Activated CD8-positive, alpha-beta T cell treated with anti-CD3 and anti-CD28 coated beads for 36 hours (primary cell): ENCODE measurements at regions of chr2 and their contacts with region 1.

Region 1: GRCh38 chr2:85420536-85421259 is 2.2 kb downstream of the SH2D6 start:
- DNase-seq: peak; percentile 95
- ATAC-seq: peak; percentile 74
- H3K4me3 Mint-ChIP-seq: peak overlapping the region; percentile 31
- H3K27ac Mint-ChIP-seq: peak overlapping the region; percentile 73
- H3K4me1 Mint-ChIP-seq: peaks cover 18% of the 10 kb centered on the region
- H3K27me3 Mint-ChIP-seq: no peaks in the 10 kb centered on the region
- CTCF ChIP-seq: peak; percentile 97

Region 2: GRCh38 chr2:85390941-85391669 is 29.6 kb before region 1 on chr2:
- CTCF ChIA-PET with region 1: interaction called, 11 read pairs
- POLR2A ChIA-PET with region 1: no interaction called
- intact Hi-C with region 1: no loop called
- DNase-seq: peak; percentile 85
- ATAC-seq: peak; percentile 88
- H3K4me3 Mint-ChIP-seq: no peak overlapping the region
- H3K27ac Mint-ChIP-seq: no peak overlapping the region
- H3K4me1 Mint-ChIP-seq: peaks cover 3% of the 10 kb centered on the region
- H3K27me3 Mint-ChIP-seq: no peaks in the 10 kb centered on the region
- CTCF ChIP-seq: peak; percentile 67

Region 3: GRCh38 chr2:85409845-85410583 is 10.7 kb before region 1 on chr2 and contains the start of gene CAPG:
- CTCF ChIA-PET with region 1: interaction called, 13 read pairs
- POLR2A ChIA-PET with region 1: no interaction called
- intact Hi-C with region 1: no loop called
- DNase-seq: peak; percentile 61
- ATAC-seq: peak; percentile 21
- H3K4me3 Mint-ChIP-seq: peak within 1 kb of the TSS; percentile 45
- H3K27ac Mint-ChIP-seq: no peak within 1 kb of the TSS
- H3K4me1 Mint-ChIP-seq: peaks cover 49% of the 10 kb centered on the region
- H3K27me3 Mint-ChIP-seq: no peaks in the 10 kb centered on the region
- CTCF ChIP-seq: no peak
- total RNA-seq, gene CAPG: 18.7 to 19.3 TPM

Region 4: DNA sequence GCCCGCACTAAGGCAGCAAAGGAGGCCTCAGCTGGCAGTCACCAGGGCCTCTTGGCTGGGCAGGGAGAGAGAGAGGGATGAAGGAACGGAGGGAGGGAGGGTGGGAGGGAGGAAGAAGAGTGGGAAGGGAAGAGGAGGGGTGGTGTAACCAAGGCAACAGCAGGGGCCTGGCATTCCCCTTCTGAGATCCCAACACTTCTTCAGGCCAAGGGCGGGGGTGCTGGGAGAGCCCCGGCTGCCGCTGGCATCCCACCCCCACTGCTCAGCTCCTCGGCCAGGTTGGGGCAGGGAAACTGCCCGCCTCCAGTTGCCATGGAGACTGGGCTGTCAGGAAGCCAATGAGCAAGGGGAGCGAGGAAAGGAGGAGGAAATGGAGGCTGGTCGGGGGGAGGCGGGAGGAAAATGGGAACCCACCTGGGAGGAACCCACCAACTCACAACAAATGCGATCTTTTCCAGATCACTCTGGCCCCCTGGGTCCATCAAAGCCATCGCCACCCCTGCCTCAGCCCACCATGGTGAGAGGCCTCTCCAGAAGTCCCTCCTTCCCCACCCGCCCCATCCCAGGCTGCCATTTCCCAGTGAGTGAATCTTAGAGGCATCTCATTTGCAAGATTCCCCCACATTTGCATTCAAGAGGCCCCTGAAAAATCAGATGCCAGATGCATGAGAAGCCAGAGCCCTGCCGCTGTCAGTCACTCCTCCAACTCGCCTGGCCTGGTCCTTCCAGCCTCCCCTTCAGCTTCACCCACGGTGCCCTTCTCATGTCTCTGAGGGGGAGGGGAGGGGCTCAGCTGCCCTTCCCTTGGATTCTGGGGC is 10.3 kb after region 1 on chr2:
- CTCF ChIA-PET with region 1: interaction called, 25 read pairs
- POLR2A ChIA-PET with region 1: interaction called, 5 read pairs
- intact Hi-C with region 1: no loop called
- DNase-seq: no peak
- ATAC-seq: no peak
- H3K4me3 Mint-ChIP-seq: no peak overlapping the region
- H3K27ac Mint-ChIP-seq: no peak overlapping the region
- H3K4me1 Mint-ChIP-seq: peaks cover 10% of the 10 kb centered on the region
- H3K27me3 Mint-ChIP-seq: no peaks in the 10 kb centered on the region
- CTCF ChIP-seq: no peak

Region 5: DNA sequence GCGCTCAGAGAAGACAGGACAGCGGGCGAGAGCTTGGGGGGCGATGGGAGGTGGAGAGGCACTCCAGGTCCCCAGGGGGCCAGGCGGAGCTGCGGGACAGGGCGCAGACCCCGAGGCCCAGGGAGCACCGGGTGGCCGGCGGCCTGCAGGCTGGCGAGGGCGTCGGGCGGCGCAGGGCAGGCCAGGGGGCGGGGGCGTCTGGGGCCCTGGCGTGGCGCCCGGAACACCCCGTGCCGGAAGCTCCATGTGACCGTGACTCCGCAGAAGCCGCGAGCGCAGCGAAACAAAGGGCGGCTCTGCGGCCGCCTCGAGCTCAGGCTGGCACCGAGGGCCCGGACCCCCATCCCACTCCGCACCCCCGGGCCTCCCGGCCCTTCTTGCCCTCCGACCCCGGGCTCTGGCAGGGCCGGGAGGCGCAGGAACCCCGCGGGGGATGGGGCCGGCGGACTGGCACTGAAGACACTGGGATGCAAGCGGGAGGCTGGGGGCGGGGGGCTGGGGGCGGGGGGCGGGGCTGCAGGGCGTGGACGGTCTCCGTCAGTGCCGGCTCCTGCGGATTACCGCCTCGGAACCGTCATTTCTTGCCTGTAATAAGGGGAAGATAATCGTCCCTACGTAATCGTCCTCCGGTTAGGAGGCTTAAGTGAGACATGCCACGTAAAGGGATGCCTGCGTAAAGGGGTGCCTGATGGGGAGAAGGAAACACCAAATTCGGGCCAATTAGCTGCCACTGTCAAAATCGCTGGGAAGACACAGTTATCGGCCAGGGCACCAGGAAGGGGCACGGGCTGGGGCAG is 17.0 kb after region 1 on chr2:
- CTCF ChIA-PET with region 1: interaction called, 8 read pairs
- POLR2A ChIA-PET with region 1: interaction called, 11 read pairs
- intact Hi-C with region 1: no loop called
- DNase-seq: peak; percentile 83
- ATAC-seq: peak; percentile 79
- H3K4me3 Mint-ChIP-seq: peak overlapping the region; percentile 78
- H3K27ac Mint-ChIP-seq: peak overlapping the region; percentile 93
- H3K4me1 Mint-ChIP-seq: peaks cover 30% of the 10 kb centered on the region
- H3K27me3 Mint-ChIP-seq: no peaks in the 10 kb centered on the region
- CTCF ChIP-seq: no peak

Region 6: GRCh38 chr2:85545780-85546240 is 125.1 kb after region 1 on chr2:
- CTCF ChIA-PET with region 1: interaction called, 221 read pairs
- POLR2A ChIA-PET with region 1: interaction called, 382 read pairs
- intact Hi-C with region 1: no loop called
- DNase-seq: no peak
- ATAC-seq: peak; percentile 5
- H3K4me3 Mint-ChIP-seq: no peak overlapping the region
- H3K27ac Mint-ChIP-seq: no peak overlapping the region
- H3K4me1 Mint-ChIP-seq: peaks cover 30% of the 10 kb centered on the region
- H3K27me3 Mint-ChIP-seq: no peaks in the 10 kb centered on the region
- CTCF ChIP-seq: no peak

Region 7: DNA sequence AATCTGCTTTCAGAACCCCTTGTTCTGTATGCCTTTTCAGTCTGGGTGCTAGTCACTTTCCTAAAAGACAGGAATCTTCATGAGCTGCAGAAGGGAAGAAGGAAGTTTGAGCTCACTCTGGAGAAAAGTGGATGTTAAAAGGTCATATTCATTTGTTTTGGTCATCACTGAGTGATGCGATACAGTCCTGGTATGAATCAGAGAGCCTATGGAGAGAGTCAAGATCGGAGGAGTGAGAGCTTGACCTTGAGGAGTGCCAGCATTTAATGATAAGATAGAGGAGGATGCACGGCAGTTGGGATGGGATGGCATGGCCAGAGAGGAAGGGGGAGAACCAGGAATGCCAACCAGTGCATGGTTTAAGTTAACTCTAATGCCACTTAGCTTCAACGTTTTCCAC is 214.9 kb after region 1 on chr2:
- CTCF ChIA-PET with region 1: interaction called, 12 read pairs
- POLR2A ChIA-PET with region 1: no interaction called
- intact Hi-C with region 1: no loop called
- DNase-seq: no peak
- ATAC-seq: no peak
- H3K4me3 Mint-ChIP-seq: no peak overlapping the region
- H3K27ac Mint-ChIP-seq: no peak overlapping the region
- H3K4me1 Mint-ChIP-seq: peaks cover 11% of the 10 kb centered on the region
- H3K27me3 Mint-ChIP-seq: no peaks in the 10 kb centered on the region
- CTCF ChIP-seq: no peak